ENCODE measurements at regions of chrX and their contacts with region 1.

Region 1: GRCh38 chrX:135213200-135213844 is 38.5 kb upstream of the ETDA start:
- DNase-seq: no peak
- H3K4me3 ChIP-seq: no peak overlapping the region
- H3K4me1 ChIP-seq: no peaks in the 10 kb centered on the region
- H3K27me3 ChIP-seq: no peaks in the 10 kb centered on the region

Region 2: GRCh38 chrX:134999469-134999868 is 213.9 kb before region 1 on chrX:
- in situ Hi-C with region 1: no loop called
- DNase-seq: peak in 1 of 2 experiments; percentile 75
- H3K4me3 ChIP-seq: no peak overlapping the region
- H3K4me1 ChIP-seq: peaks cover 5% of the 10 kb centered on the region
- H3K27me3 ChIP-seq: no peaks in the 10 kb centered on the region

Region 3: GRCh38 chrX:135302269-135302873 is 89.0 kb after region 1 on chrX:
- in situ Hi-C with region 1: no loop called
- DNase-seq: peak; percentile 37 to 86
- H3K4me3 ChIP-seq: no peak overlapping the region
- H3K4me1 ChIP-seq: peaks cover 27% of the 10 kb centered on the region
- H3K27me3 ChIP-seq: no peaks in the 10 kb centered on the region

Region 4: DNA sequence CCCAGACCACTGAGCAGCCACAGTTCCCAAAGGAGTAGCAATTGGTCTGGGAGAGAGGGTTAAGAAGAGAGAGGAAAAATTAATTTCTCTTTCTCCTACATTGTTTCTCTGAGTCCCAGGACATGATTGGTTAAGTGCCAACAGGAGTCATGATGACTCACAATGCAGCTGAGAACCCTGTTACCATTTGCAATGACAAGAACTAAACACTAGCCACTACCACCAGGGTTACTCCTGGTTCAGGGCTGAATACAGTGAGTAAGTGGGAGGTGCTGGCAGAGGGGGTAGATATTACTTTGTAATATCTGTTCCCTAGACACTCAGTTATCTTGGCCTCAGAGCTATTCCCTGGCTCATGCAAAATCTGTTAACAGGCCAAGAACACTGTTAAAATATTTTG is 114.0 kb after region 1 on chrX:
- in situ Hi-C with region 1: no loop called
- DNase-seq: no peak
- H3K4me3 ChIP-seq: no peak overlapping the region
- H3K4me1 ChIP-seq: no peaks in the 10 kb centered on the region
- H3K27me3 ChIP-seq: no peaks in the 10 kb centered on the region

Region 5: DNA sequence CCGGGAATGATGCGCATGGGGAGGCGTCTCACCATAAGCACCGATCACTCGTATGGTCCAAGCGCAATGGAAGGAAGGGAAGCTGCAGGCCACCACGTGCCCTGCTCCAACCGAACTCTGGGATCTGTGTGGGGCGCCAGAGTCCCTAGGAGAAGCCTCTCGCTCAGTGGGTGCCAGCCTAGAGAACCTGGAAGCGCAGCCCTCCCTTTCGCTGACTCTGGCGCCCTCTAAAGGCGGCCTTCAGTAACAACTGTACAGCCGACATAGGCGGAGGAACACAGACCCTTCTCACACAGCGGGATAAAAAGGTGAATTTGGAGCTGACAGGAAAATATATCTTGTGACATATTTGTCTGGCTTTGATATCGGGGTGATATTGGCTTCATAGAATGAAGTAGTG is 383.2 kb after region 1 on chrX:
- in situ Hi-C with region 1: loop called (anchors 25 kb)
- DNase-seq: peak; percentile 59 to 88
- H3K4me3 ChIP-seq: no peak overlapping the region
- H3K4me1 ChIP-seq: peaks cover 10% of the 10 kb centered on the region
- H3K27me3 ChIP-seq: peaks cover 11% of the 10 kb centered on the region